ENCODE measurements at regions of chr1 and their contacts with region 1.

Region 1: DNA sequence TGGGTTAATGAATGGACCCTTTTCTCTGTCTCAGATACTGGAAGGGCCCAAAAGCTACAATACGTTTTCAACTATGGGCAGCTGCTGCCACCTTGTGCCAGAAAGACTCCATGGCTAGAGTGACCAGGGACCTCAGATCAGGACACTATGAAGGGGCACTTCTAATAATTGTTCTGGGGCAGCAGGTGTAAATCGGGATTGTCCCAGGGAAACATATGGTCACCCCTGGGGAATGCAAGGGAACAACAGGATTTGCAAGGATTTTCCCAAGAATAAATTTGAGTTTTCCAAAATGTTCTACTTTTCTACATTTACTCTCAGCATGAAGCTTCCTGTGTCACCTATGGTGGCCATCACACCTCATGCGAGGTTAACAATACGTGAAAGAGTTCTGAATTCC is 12.0 kb upstream of the FCAMR start:
- DNase-seq: peak; percentile 56 to 68 (median 66)
- H3K4me3 ChIP-seq: no peak overlapping the region
- H3K27ac ChIP-seq: no peak overlapping the region
- H3K4me1 ChIP-seq: peaks cover 0 to 5% (median 0%) of the 10 kb centered on the region in 4 experiments
- H3K27me3 ChIP-seq: peaks cover 0 to 6% (median 0%) of the 10 kb centered on the region in 5 experiments

Region 2: GRCh38 chr1:206635080-206635977 is 346.9 kb before region 1 on chr1 and contains the start of gene DYRK3:
- CTCF ChIA-PET with region 1: interaction called, 11 read pairs
- POLR2A ChIA-PET with region 1: no interaction called
- DNase-seq: peak; percentile 91 to 93 (median 92)
- H3K4me3 ChIP-seq: peak within 1 kb of the TSS; percentile 76 to 98 (median 85)
- H3K27ac ChIP-seq: peak within 1 kb of the TSS; percentile 82 to 86
- H3K4me1 ChIP-seq: peaks cover 11 to 29% (median 22%) of the 10 kb centered on the region in 4 experiments
- H3K27me3 ChIP-seq: no peaks in the 10 kb centered on the region

Region 3: DNA sequence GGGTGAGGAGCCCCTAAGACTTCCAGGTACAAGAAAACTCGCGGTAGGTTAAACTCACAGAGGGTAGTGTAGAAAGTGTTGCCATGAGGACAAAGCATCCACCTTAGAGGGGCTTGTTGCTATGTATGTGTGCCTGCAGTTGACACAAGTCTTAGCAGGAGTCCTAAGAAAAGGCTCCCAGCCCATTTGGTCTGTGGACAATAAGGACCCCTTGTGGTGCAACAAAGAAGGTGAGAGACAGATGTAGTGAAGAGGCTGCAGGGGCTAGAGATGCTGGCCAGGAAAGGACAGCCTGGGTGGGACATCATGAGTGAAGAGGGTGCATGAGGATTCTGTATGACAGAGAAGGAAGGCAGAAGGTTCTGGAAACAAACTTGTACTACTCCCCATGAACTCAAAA is 173.6 kb before region 1 on chr1:
- CTCF ChIA-PET with region 1: interaction called, 59 read pairs
- POLR2A ChIA-PET with region 1: no interaction called
- DNase-seq: peak; percentile 63 to 84 (median 81)
- H3K4me3 ChIP-seq: no peak overlapping the region
- H3K27ac ChIP-seq: no peak overlapping the region
- H3K4me1 ChIP-seq: no peaks in the 10 kb centered on the region
- H3K27me3 ChIP-seq: no peaks in the 10 kb centered on the region

Region 4: GRCh38 chr1:206925106-206925736 is 57.0 kb before region 1 on chr1:
- CTCF ChIA-PET with region 1: interaction called, 220 read pairs
- POLR2A ChIA-PET with region 1: no interaction called
- DNase-seq: peak in 1 of 3 donors; percentile 57
- H3K4me3 ChIP-seq: no peak overlapping the region
- H3K27ac ChIP-seq: no peak overlapping the region
- H3K4me1 ChIP-seq: peaks cover 20 to 49% (median 46%) of the 10 kb centered on the region in 4 experiments
- H3K27me3 ChIP-seq: no peaks in the 10 kb centered on the region

Region 5: GRCh38 chr1:206941858-206942387 is 40.3 kb before region 1 on chr1:
- CTCF ChIA-PET with region 1: interaction called, 220 read pairs
- POLR2A ChIA-PET with region 1: no interaction called
- DNase-seq: peak in 1 of 3 donors; percentile 48
- H3K4me3 ChIP-seq: no peak overlapping the region
- H3K27ac ChIP-seq: no peak overlapping the region
- H3K4me1 ChIP-seq: peaks cover 0 to 3% (median 0%) of the 10 kb centered on the region in 4 experiments
- H3K27me3 ChIP-seq: no peaks in the 10 kb centered on the region

Region 6: DNA sequence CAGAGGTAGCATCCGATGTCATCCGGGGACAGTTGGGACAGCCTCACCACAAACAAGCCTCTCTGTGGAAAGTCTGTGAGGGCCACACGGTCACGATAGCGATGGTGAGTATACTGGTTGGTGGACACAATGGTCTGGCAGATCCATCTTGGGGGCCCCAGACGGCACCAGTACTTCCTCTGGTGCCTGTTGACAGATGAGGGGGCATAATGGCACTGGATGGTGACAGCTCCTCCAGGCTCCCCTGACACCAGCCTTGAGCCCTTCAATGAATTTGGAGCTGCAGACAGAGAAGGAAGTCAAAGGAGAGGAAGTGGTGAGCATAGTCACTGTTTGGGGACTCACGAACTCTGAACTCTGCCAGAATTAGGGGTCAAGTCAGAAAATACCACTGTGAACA is 19.9 kb before region 1 on chr1:
- CTCF ChIA-PET with region 1: interaction called, 31 read pairs
- POLR2A ChIA-PET with region 1: no interaction called
- DNase-seq: peak in 2 of 3 donors; percentile 67 to 82
- H3K4me3 ChIP-seq: no peak overlapping the region
- H3K27ac ChIP-seq: no peak overlapping the region
- H3K4me1 ChIP-seq: peaks cover 6 to 44% (median 21%) of the 10 kb centered on the region in 4 experiments
- H3K27me3 ChIP-seq: no peaks in the 10 kb centered on the region

Region 7: GRCh38 chr1:206992790-206993189 is 10.6 kb after region 1 on chr1:
- CTCF ChIA-PET with region 1: interaction called, 17 read pairs
- POLR2A ChIA-PET with region 1: interaction called, 3 read pairs
- DNase-seq: no peak
- H3K4me3 ChIP-seq: no peak overlapping the region
- H3K27ac ChIP-seq: no peak overlapping the region
- H3K4me1 ChIP-seq: no peaks in the 10 kb centered on the region
- H3K27me3 ChIP-seq: no peaks in the 10 kb centered on the region

Measured in common myeloid progenitor, CD34-positive (primary cell).